ENCODE measurements at regions of chr12 and their contacts with region 1.

Region 1: GRCh38 chr12:4118017-4118510 is 155.5 kb upstream of the CCND2 start:
- DNase-seq: no peak
- H3K4me3 Mint-ChIP-seq: peak overlapping the region; percentile 73
- H3K27ac Mint-ChIP-seq: peak overlapping the region; percentile 89
- H3K4me1 Mint-ChIP-seq: peaks cover 60% of the 10 kb centered on the region
- H3K27me3 Mint-ChIP-seq: no peaks in the 10 kb centered on the region

Region 2: GRCh38 chr12:4135919-4136605 is 18.0 kb after region 1 on chr12:
- intact Hi-C with region 1: loop called (anchors 1 kb)
- DNase-seq: peak; percentile 75
- H3K4me3 Mint-ChIP-seq: peak overlapping the region; percentile 5
- H3K27ac Mint-ChIP-seq: peak overlapping the region; percentile 91
- H3K4me1 Mint-ChIP-seq: peaks cover 46% of the 10 kb centered on the region
- H3K27me3 Mint-ChIP-seq: no peaks in the 10 kb centered on the region

Region 3: DNA sequence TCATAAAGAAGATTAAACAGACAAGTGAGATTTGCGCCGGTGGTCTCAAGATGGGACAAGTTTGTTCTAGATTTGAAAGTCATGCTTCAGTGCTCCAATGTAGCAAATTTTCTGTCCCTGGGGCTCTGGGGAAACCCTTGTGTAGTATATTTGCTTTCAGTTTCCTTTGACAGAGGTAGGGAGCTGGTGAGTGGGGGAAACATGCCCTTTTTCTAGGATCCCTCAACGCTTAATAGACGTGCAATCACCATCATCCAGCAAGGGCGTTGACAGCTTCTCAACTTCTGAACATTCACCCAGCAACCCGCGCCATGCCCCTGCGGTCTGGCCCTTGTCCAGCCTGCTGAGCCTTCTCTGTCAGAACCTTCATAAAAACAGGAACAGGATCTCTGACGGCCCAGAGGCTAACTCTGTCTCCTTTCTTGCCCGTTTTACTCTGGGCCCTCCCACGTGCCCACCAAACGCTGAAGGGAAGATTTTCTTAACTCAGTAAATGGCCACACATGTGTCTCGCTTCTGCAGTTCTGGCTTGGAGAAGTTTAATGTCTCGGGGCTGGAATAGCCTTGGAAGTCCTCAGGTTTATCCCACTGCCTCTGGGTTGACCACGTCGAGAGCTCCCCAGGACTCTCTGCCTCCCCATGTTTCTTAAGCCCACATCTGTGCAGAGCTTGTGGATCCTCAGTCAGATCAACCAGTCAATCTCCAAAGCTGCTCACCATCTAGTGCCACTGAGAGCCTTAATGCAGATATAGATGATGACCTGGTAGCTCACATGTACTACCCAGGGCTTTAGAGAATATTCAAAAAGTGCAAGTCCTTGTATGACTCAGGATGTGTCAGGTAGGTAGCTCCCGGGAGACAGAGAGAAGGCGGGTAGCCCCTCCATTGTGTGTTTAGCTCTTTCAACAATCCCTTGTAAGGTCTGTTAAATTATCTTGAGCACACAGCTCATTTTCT is 97.4 kb after region 1 on chr12:
- intact Hi-C with region 1: loop called (anchors 5 kb)
- DNase-seq: peak; percentile 81
- H3K4me3 Mint-ChIP-seq: peak overlapping the region; percentile 72
- H3K27ac Mint-ChIP-seq: peak overlapping the region; percentile 82
- H3K4me1 Mint-ChIP-seq: peaks cover 46% of the 10 kb centered on the region
- H3K27me3 Mint-ChIP-seq: peaks cover 2% of the 10 kb centered on the region